ENCODE measurements at regions of chr7 and their contacts with region 1.

Region 1: GRCh38 chr7:148932-149855 is 43.2 kb upstream of the FAM20C start:
- DNase-seq: peak; percentile 97
- H3K4me3 Mint-ChIP-seq: peak overlapping the region; percentile 90
- H3K27ac Mint-ChIP-seq: peak overlapping the region; percentile 96
- H3K4me1 Mint-ChIP-seq: peaks cover 11% of the 10 kb centered on the region
- H3K27me3 Mint-ChIP-seq: no peaks in the 10 kb centered on the region

Region 2: GRCh38 chr7:101146-102046 is 47.8 kb before region 1 on chr7:
- CTCF ChIA-PET with region 1: no interaction called
- intact Hi-C with region 1: no loop called
- DNase-seq: no peak
- H3K4me3 Mint-ChIP-seq: no peak overlapping the region
- H3K27ac Mint-ChIP-seq: no peak overlapping the region
- H3K4me1 Mint-ChIP-seq: peaks cover 4% of the 10 kb centered on the region
- H3K27me3 Mint-ChIP-seq: peaks cover 3% of the 10 kb centered on the region

Region 3: DNA sequence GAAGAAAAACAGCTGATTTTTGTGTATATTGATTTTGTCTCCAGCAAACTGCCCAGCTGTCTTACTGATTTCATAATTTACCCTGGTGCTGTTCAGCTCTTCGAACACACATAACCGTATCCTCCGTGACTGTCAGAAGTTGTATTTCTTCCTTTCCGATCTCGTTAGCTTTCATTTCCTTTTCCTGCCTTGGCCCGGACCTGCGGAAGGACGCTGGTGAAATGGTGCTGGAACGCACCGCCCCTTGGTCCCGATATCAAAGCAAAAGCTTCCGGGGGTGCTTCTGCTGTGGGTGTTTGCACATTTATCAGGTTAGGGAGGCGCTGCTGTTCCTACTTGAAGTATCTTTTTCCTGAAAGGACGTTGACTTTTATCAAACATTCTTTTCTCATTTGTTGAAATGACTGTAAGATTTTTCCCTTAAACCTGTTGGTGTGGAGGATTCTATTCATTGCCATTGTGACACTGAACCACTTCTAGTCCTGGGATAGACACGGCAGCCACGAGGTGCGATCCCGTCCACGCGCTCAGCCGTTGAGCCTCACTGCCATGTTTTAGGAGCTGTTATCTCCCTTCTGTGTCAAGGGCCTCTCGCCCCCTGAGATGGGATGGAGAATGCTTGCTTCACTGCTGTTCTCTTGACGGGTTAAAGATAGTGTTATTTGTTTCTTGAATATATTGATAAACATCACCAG is 213.4 kb after region 1 on chr7:
- CTCF ChIA-PET with region 1: no interaction called
- intact Hi-C with region 1: loop called (anchors 5 kb)
- DNase-seq: peak; percentile 69
- H3K4me3 Mint-ChIP-seq: peak overlapping the region; percentile 67
- H3K27ac Mint-ChIP-seq: peak overlapping the region; percentile 79
- H3K4me1 Mint-ChIP-seq: peaks cover 66% of the 10 kb centered on the region
- H3K27me3 Mint-ChIP-seq: no peaks in the 10 kb centered on the region

Region 4: GRCh38 chr7:620052-620451 is 470.9 kb after region 1 on chr7:
- CTCF ChIA-PET with region 1: no interaction called
- intact Hi-C with region 1: loop called (anchors 5 kb)
- DNase-seq: peak; percentile 59
- H3K4me3 Mint-ChIP-seq: no peak overlapping the region
- H3K27ac Mint-ChIP-seq: peak overlapping the region; percentile 99
- H3K4me1 Mint-ChIP-seq: peaks cover 60% of the 10 kb centered on the region
- H3K27me3 Mint-ChIP-seq: no peaks in the 10 kb centered on the region

Region 5: DNA sequence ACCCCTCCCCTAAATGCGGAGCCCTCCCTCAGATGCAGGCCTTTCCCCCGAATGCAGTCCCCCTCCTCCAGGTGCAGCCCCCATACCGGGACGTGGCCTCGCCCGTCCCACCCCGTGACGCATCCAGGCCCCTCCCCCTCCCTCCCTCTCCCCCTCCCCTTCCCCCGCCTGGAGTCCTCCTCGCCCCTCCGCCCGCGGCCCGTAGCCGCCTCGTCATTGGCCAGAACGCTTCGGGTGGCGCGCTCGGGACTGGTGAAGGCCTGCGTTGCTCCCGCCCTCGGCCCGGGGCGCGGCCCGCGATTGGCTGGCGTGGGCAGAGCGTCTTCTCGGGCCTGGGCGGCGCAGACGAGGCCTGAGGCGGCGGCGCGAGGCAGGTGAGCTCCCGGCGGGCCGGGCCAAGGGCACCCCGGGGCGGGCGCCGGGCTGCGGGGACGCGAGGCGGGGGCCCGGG is 667.1 kb after region 1 on chr7:
- CTCF ChIA-PET with region 1: no interaction called
- intact Hi-C with region 1: loop called (anchors 2 kb)
- DNase-seq: peak; percentile 98
- H3K4me3 Mint-ChIP-seq: peak overlapping the region; percentile 81
- H3K27ac Mint-ChIP-seq: no peak overlapping the region
- H3K4me1 Mint-ChIP-seq: peaks cover 61% of the 10 kb centered on the region
- H3K27me3 Mint-ChIP-seq: peaks cover 5% of the 10 kb centered on the region